OCI-LY7 (cell line): ENCODE measurements at regions of chr14 and their contacts with region 1.

Region 1: GRCh38 chr14:60331201-60332045 is 82.4 kb downstream of the PPM1A start:
- DNase-seq: peak; percentile 96
- H3K4me3 ChIP-seq: peak overlapping the region; percentile 60
- H3K27ac ChIP-seq: peak overlapping the region; percentile 97
- H3K4me1 ChIP-seq: peaks cover 61% of the 10 kb centered on the region
- CTCF ChIP-seq: peak; percentile 100

Region 2: GRCh38 chr14:59126710-59127432 is 1204.6 kb before region 1 on chr14:
- CTCF ChIA-PET with region 1: no interaction called
- POLR2A ChIA-PET with region 1: no interaction called
- intact Hi-C with region 1: loop called (anchors 5 kb)
- DNase-seq: peak; percentile 83
- H3K4me3 ChIP-seq: no peak overlapping the region
- H3K27ac ChIP-seq: no peak overlapping the region
- H3K4me1 ChIP-seq: peaks cover 21% of the 10 kb centered on the region
- CTCF ChIP-seq: peak; percentile 98

Region 3: DNA sequence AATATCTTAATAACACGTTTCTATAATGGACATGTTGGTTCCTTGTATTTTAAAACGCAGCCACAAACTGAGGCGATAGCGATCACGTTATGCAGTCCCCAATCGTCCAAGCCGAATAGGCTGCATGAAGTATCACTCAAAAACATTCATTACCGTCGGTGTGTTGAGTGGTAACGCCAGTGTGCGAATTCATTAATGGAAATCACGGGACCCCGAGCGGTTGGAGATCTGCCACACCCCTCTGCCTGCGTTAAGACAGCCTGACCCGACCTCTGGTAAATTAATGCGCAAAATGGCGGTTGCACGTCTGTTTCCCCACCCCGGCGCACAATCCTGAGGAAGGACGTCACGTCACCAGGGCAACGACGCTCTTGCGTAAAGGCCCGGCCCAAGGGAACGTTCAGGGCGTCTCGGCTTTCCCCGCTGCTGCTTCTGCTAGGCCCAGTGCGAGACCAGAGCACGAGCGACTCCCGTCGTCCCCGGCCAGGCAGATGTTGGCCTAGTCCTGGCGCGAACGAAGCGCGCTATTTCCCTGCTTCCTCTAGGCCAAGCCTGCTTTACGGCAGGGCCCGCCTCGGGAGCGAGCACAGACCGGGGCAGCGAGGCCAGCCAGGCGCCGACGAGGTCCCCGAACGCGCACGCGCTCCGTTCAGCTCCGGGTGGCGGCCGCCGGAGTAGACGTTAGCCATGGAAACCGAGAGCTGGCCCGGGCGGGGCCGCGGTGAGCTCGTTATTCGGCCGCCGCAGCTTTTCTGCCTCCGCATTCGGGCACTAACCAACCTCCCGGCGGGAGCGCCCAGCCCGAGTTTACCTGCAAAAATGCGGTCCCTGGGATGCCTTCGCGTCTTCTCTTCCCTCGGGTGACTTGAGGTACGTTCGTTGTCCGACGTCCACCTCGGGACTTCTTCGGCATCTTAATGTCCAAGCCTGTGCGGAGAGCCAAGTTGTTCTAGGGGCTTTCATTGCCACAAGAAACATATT is 239.6 kb before region 1 on chr14 and contains the start of gene PCNX4:
- CTCF ChIA-PET with region 1: no interaction called
- POLR2A ChIA-PET with region 1: interaction called, 3 read pairs
- intact Hi-C with region 1: loop called (anchors 5 kb)
- DNase-seq: peak; percentile 99
- H3K4me3 ChIP-seq: peak within 1 kb of the TSS; percentile 82
- H3K27ac ChIP-seq: peak within 1 kb of the TSS; percentile 86
- H3K4me1 ChIP-seq: peaks cover 33% of the 10 kb centered on the region
- CTCF ChIP-seq: no peak
- total RNA-seq, gene PCNX4: 47.0 and 49.1 TPM in 2 replicates

Region 4: GRCh38 chr14:60204104-60204842 is 127.2 kb before region 1 on chr14:
- CTCF ChIA-PET with region 1: interaction called, 3 read pairs
- POLR2A ChIA-PET with region 1: interaction called, 22 read pairs
- intact Hi-C with region 1: loop called (anchors 1 kb)
- DNase-seq: peak; percentile 94
- H3K4me3 ChIP-seq: peak overlapping the region; percentile 52
- H3K27ac ChIP-seq: peak overlapping the region; percentile 96
- H3K4me1 ChIP-seq: peaks cover 44% of the 10 kb centered on the region
- CTCF ChIP-seq: no peak

Region 5: DNA sequence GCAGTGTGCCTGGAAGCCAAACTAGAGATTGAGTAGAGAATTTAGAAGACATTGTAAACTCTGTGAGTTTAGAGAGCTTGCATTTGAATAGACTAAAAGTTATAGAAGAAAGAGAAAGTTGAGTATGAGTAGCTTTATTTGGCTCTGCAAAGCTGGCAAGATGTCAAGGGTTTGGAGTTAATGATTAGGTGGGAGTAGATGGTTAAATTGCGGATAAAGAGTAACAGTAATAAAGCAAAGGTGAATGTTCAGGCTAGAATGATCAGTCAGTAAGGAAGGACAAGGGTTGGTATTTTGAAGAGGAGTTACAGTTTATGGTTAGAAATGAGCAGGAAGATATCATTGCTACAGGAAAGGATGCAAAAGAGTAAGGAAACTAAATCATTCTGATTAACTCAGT is 77.2 kb before region 1 on chr14:
- CTCF ChIA-PET with region 1: interaction called, 5 read pairs
- POLR2A ChIA-PET with region 1: interaction called, 115 read pairs
- intact Hi-C with region 1: loop called (anchors 1 kb)
- DNase-seq: no peak
- H3K4me3 ChIP-seq: no peak overlapping the region
- H3K27ac ChIP-seq: no peak overlapping the region
- H3K4me1 ChIP-seq: peaks cover 36% of the 10 kb centered on the region
- CTCF ChIP-seq: no peak

Region 6: DNA sequence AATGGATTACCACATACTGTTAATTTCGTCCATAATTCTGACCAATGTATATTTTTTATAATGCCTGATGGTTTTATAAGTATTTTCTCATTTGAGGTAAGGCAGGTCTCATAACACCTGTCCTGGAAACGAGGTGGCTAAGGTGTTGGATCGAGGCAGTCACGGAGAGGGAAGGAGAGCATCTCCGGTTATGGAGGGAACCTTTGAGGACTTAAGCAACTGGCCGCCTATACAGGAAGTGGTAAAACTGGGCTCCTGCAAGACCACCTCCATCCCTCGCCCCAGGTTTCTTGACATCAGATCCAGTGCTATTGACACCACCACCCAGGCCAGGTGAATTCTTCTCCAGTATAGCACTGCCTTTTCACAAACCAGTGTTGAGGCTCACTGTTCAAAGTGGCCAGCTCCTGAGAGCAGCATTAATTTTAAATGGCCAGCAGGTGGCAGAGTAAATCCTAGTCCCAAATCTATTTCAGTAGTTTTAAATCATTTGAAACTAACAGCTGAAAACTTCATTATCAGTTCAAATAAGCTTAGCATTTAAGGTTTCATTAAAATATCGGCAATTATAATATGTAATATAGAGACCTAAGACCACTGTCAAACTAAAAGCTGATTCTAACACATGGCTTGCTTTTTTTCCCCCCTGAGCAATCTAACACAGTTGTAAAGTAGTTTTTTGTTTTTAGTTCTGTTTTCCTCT is 18.4 kb after region 1 on chr14:
- CTCF ChIA-PET with region 1: interaction called, 29 read pairs
- POLR2A ChIA-PET with region 1: interaction called, 128 read pairs
- intact Hi-C with region 1: loop called (anchors 1 kb)
- DNase-seq: peak; percentile 83
- H3K4me3 ChIP-seq: peak overlapping the region; percentile 57
- H3K27ac ChIP-seq: peak overlapping the region; percentile 95
- H3K4me1 ChIP-seq: peaks cover 61% of the 10 kb centered on the region
- CTCF ChIP-seq: peak; percentile 96

Region 7: DNA sequence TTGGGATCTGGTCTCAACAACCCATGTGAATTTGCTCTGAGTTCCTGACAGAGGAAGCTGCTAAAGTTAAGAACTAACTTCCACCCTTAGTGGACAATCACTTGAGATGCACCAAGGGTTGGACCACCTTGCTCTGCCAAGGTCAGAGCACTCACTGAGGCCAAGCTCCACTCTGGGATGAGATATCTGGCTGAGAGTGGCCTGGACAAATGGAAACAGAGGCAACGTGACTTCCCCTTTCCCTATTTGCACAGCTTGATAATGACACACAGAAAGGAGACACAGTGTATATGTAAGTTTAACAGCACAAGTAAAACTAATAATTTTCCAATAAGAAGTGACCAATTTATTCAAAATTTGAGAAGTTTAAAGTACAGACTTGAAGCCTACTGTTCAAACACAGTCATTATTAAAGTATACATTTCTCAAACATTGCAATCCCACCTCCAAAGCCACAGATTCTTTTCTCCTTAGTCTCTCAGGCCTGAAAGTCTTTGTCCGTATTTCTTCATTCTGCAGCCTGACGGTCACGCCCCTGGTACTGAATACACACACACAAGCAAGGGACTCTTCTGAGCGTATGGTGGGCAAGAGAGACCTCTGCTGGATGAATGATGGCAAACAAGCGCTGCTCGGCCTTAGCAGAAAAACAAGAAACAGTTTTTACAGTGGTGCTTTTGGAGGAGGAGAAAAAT is 921.1 kb after region 1 on chr14:
- CTCF ChIA-PET with region 1: no interaction called
- POLR2A ChIA-PET with region 1: no interaction called
- intact Hi-C with region 1: loop called (anchors 5 kb)
- DNase-seq: peak; percentile 89
- H3K4me3 ChIP-seq: peak overlapping the region; percentile 40
- H3K27ac ChIP-seq: peak overlapping the region; percentile 69
- H3K4me1 ChIP-seq: peaks cover 23% of the 10 kb centered on the region
- CTCF ChIP-seq: peak; percentile 98